Calu3 (cell line): ENCODE measurements at regions of chr12 and their contacts with region 1.

Region 1: GRCh38 chr12:62778187-62778586 is 156.8 kb downstream of the PPM1H start:
- DNase-seq: no peak
- H3K4me3 Mint-ChIP-seq: no peak overlapping the region
- H3K27ac Mint-ChIP-seq: no peak overlapping the region
- H3K4me1 Mint-ChIP-seq: no peaks in the 10 kb centered on the region
- H3K27me3 Mint-ChIP-seq: no peaks in the 10 kb centered on the region
- CTCF ChIP-seq: no peak

Region 2: DNA sequence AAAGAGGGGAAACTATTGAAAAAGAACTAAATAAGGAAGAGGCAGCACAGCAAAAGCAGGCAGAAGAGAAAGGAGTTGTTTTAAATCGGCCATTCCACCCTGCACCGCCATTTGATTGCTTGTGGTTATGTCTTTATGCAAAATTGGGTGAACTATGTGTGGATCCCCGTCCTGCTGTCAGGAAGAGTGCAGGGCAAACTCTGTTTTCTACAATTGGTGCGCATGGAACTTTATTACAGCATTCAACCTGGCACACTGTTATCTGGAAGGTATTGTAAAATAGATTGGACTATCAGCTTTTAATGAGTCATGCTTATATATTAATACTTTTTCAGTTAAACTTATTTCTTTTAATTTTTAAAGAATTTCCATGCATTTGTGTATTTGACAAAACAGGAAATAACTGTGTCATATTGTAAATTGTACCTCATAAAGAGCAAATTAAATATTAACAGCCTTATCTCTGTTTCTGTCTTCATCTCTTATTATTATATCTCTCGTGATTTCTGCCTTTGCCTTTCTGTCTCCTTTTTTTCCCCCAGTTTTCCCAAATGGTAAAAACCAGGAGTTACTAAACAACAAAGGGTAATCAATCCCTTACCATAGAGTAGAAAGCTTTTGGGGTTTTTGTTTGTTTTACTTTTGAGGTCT is 225.2 kb before region 1 on chr12:
- CTCF ChIA-PET with region 1: interaction called, 11 read pairs
- intact Hi-C with region 1: no loop called
- DNase-seq: no peak
- H3K4me3 Mint-ChIP-seq: no peak overlapping the region
- H3K27ac Mint-ChIP-seq: peak overlapping the region; percentile 23
- H3K4me1 Mint-ChIP-seq: peaks cover 19% of the 10 kb centered on the region
- H3K27me3 Mint-ChIP-seq: no peaks in the 10 kb centered on the region
- CTCF ChIP-seq: no peak